ENCODE measurements at regions of chr16 and their contacts with region 1.

Region 1: GRCh38 chr16:87387942-87388817 is 4.0 kb upstream of the MAP1LC3B start:
- DNase-seq: peak; percentile 92
- ATAC-seq: peak; percentile 74
- H3K4me3 Mint-ChIP-seq: peak overlapping the region; percentile 36
- H3K27ac Mint-ChIP-seq: peak overlapping the region; percentile 95
- H3K4me1 Mint-ChIP-seq: peaks cover 49% of the 10 kb centered on the region
- H3K27me3 Mint-ChIP-seq: no peaks in the 10 kb centered on the region

Region 2: GRCh38 chr16:86664533-86665318 is 723.5 kb before region 1 on chr16:
- CTCF ChIA-PET with region 1: no interaction called
- POLR2A ChIA-PET with region 1: no interaction called
- intact Hi-C with region 1: loop called in 1 of 2 experiments (anchors 5 kb)
- DNase-seq: peak; percentile 85
- ATAC-seq: peak; percentile 95
- H3K4me3 Mint-ChIP-seq: peak overlapping the region; percentile 21
- H3K27ac Mint-ChIP-seq: peak overlapping the region; percentile 83
- H3K4me1 Mint-ChIP-seq: peaks cover 28% of the 10 kb centered on the region
- H3K27me3 Mint-ChIP-seq: peaks cover 31% of the 10 kb centered on the region

Region 3: DNA sequence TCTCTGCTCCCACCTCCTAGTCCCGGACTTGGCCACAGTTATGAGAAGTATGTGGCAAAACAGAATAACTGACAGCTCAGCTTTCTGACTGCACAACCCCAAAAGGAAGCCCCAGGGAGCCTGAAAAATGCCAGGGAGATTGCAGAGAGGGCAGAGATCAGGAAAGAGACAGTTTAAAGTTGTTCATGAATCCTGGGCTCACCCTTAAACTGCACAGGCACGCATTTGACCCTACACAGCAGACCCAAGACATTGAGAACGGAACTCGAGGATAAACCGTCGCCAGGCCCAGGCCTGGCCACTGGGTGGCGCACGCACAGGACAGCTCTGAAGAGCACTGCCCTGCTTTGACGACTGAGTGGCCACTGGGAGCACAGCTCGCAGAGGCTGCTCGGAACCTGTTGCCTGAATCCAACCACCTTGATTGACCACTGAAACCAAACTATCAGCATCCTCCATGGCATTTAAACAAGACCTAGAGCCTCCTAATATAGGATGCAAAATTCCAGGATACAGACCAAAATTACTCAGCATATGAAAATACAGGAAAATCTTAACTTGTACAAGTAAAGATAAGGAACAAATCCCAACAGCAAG is 185.0 kb before region 1 on chr16:
- CTCF ChIA-PET with region 1: no interaction called
- POLR2A ChIA-PET with region 1: no interaction called
- intact Hi-C with region 1: no loop called
- DNase-seq: peak; percentile 79
- ATAC-seq: peak; percentile 83
- H3K4me3 Mint-ChIP-seq: no peak overlapping the region
- H3K27ac Mint-ChIP-seq: no peak overlapping the region
- H3K4me1 Mint-ChIP-seq: no peaks in the 10 kb centered on the region
- H3K27me3 Mint-ChIP-seq: peaks cover 8% of the 10 kb centered on the region

Region 4: GRCh38 chr16:87375426-87376135 is 12.6 kb before region 1 on chr16:
- CTCF ChIA-PET with region 1: interaction called, 14 read pairs
- POLR2A ChIA-PET with region 1: interaction called, 10 read pairs
- intact Hi-C with region 1: no loop called
- DNase-seq: no peak
- ATAC-seq: no peak
- H3K4me3 Mint-ChIP-seq: no peak overlapping the region
- H3K27ac Mint-ChIP-seq: peak overlapping the region; percentile 31
- H3K4me1 Mint-ChIP-seq: peaks cover 46% of the 10 kb centered on the region
- H3K27me3 Mint-ChIP-seq: no peaks in the 10 kb centered on the region

Region 5: GRCh38 chr16:87765776-87766484 is 377.8 kb after region 1 on chr16 and contains the start of gene KLHDC4:
- CTCF ChIA-PET with region 1: no interaction called
- POLR2A ChIA-PET with region 1: no interaction called
- intact Hi-C with region 1: loop called in 1 of 2 experiments (anchors 5 kb)
- DNase-seq: peak; percentile 94
- ATAC-seq: peak; percentile 88
- H3K4me3 Mint-ChIP-seq: peak within 1 kb of the TSS; percentile 100
- H3K27ac Mint-ChIP-seq: peak within 1 kb of the TSS; percentile 99
- H3K4me1 Mint-ChIP-seq: peaks cover 35% of the 10 kb centered on the region
- H3K27me3 Mint-ChIP-seq: no peaks in the 10 kb centered on the region
- total RNA-seq, gene KLHDC4: 67.0 to 77.3 TPM

Region 6: GRCh38 chr16:87950765-87951549 is 562.8 kb after region 1 on chr16 and contains the start of gene BANP:
- CTCF ChIA-PET with region 1: no interaction called
- POLR2A ChIA-PET with region 1: interaction called, 4 read pairs
- intact Hi-C with region 1: loop called in 1 of 2 experiments (anchors 1 kb)
- DNase-seq: peak; percentile 98
- ATAC-seq: peak; percentile 96
- H3K4me3 Mint-ChIP-seq: peak within 1 kb of the TSS; percentile 93
- H3K27ac Mint-ChIP-seq: peak within 1 kb of the TSS; percentile 100
- H3K4me1 Mint-ChIP-seq: peaks cover 47% of the 10 kb centered on the region
- H3K27me3 Mint-ChIP-seq: no peaks in the 10 kb centered on the region
- total RNA-seq, gene BANP: 35.2 to 36.1 TPM

Measured in activated CD4-positive, alpha-beta T cell treated with anti-CD3 and anti-CD28 coated beads for 36 hours (primary cell).